Endothelial cell of umbilical vein (primary cell): ENCODE measurements at regions of chr5 and their contacts with region 1.

Region 1: GRCh38 chr5:128538250-128539037 is 399 bp upstream of the FBN2 start:
- DNase-seq: peak; percentile 85
- H3K4me3 ChIP-seq: peak overlapping the region; percentile 65 to 96 (median 78)
- H3K27ac ChIP-seq: peak overlapping the region; percentile 22
- H3K4me1 ChIP-seq: peaks cover 2% of the 10 kb centered on the region
- H3K27me3 ChIP-seq: no peaks in the 10 kb centered on the region
- CTCF ChIP-seq: no peak
- POLR2A ChIP-seq: no peak

Region 2: DNA sequence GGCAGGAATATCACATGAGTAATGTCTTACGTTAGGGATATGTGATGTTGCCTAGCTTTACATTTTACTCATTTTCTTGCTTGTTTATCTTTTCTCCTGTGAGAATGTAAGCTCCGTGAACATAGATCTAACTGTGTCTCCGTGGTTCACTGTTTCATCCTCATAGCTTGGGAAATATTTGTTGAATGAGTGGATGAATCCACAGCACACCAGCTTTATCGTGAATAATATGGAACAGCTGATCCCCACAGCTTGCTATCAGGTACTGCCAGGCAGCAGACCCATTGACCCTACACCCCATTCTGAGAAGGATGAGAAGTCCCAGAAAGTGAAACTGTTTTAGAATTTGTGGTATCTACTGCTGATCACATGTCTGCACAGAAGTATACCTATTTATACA is 106.4 kb after region 1 on chr5:
- CTCF ChIA-PET with region 1: interaction called, 3 read pairs
- POLR2A ChIA-PET with region 1: no interaction called
- dilution Hi-C with region 1: no loop called
- intact Hi-C with region 1: loop called (anchors 2 kb)
- DNase-seq: peak; percentile 86
- H3K4me3 ChIP-seq: peak overlapping the region in 2 of 3 experiments; percentile 24 to 50
- H3K27ac ChIP-seq: peak overlapping the region; percentile 57
- H3K4me1 ChIP-seq: peaks cover 20% of the 10 kb centered on the region
- H3K27me3 ChIP-seq: no peaks in the 10 kb centered on the region
- CTCF ChIP-seq: no peak
- POLR2A ChIP-seq: no peak

Region 3: GRCh38 chr5:128782446-128782845 is 244.0 kb after region 1 on chr5:
- CTCF ChIA-PET with region 1: no interaction called
- POLR2A ChIA-PET with region 1: no interaction called
- dilution Hi-C with region 1: no loop called
- intact Hi-C with region 1: loop called (anchors 2 kb)
- DNase-seq: peak; percentile 96
- H3K4me3 ChIP-seq: no peak overlapping the region
- H3K27ac ChIP-seq: peak overlapping the region; percentile 76
- H3K4me1 ChIP-seq: peaks cover 22% of the 10 kb centered on the region
- H3K27me3 ChIP-seq: no peaks in the 10 kb centered on the region
- CTCF ChIP-seq: no peak
- POLR2A ChIP-seq: no peak

Region 4: DNA sequence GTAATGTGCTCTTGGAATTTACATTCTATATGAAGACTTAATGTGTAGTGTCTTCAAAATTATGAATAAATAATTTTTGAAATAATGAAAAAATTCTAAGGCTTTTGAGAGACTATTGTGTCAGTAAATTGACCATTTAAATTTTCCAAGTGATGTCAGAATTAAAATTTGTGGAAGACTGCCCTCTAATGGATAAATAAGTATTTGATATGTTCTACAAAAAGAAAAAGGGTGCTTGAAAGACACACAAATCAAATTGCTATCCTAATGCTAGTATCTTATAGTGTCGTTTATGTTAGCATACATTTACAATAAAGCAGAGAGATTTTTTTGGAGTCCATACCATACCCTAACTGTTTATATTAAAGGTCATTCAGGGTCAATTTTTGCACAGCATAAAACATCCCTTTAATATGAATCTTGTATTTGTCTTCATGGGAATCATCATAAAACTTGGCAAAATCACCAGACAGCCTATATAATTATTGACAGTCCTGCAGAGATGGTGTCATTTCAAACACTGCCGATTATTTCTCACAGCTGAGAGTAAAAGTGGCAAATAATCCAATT is 306.0 kb after region 1 on chr5:
- CTCF ChIA-PET with region 1: interaction called, 5 read pairs
- POLR2A ChIA-PET with region 1: no interaction called
- dilution Hi-C with region 1: no loop called
- intact Hi-C with region 1: loop called (anchors 1 kb)
- DNase-seq: peak; percentile 53
- H3K4me3 ChIP-seq: no peak overlapping the region
- H3K27ac ChIP-seq: no peak overlapping the region
- H3K4me1 ChIP-seq: no peaks in the 10 kb centered on the region
- H3K27me3 ChIP-seq: no peaks in the 10 kb centered on the region
- CTCF ChIP-seq: peak in 1 of 2 donors; percentile 1
- POLR2A ChIP-seq: no peak